Activated naive CD4-positive, alpha-beta T cell treated with anti-CD3 and anti-CD28 coated beads for 36 hours (primary cell): ENCODE measurements at regions of chr11 and their contacts with region 1.

Region 1: DNA sequence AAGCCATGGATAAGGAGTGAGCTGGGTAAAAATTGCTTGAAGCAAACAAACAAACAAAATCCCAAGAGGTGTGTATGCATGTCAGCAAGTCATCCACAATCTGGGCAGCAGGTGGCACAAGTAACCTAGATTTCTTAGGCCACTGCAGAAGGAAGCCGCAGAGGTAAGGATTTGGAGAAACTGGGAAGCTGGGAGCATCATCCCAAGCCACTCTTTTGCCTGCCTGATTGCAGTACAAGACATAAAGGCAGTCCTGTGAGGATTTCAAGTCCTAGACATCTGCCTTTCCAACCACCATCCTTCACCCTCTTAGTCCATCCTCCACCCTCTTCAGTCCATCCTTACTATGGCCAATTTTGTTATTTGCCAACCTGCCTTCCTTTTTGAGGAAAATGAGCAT is 67.2 kb upstream of the BMAL1 start:
- DNase-seq: peak; percentile 62
- H3K4me3 Mint-ChIP-seq: no peak overlapping the region
- H3K27ac Mint-ChIP-seq: no peak overlapping the region
- H3K4me1 Mint-ChIP-seq: peaks cover 39% of the 10 kb centered on the region
- H3K27me3 Mint-ChIP-seq: no peaks in the 10 kb centered on the region

Region 2: GRCh38 chr11:12693479-12694181 is 516.8 kb before region 1 on chr11:
- CTCF ChIA-PET with region 1: no interaction called
- intact Hi-C with region 1: loop called (anchors 10 kb)
- DNase-seq: peak; percentile 57
- H3K4me3 Mint-ChIP-seq: no peak overlapping the region
- H3K27ac Mint-ChIP-seq: no peak overlapping the region
- H3K4me1 Mint-ChIP-seq: peaks cover 21% of the 10 kb centered on the region
- H3K27me3 Mint-ChIP-seq: peaks cover 73% of the 10 kb centered on the region

Region 3: GRCh38 chr11:13061284-13061990 is 149.0 kb before region 1 on chr11:
- CTCF ChIA-PET with region 1: no interaction called
- intact Hi-C with region 1: no loop called
- DNase-seq: no peak
- H3K4me3 Mint-ChIP-seq: no peak overlapping the region
- H3K27ac Mint-ChIP-seq: no peak overlapping the region
- H3K4me1 Mint-ChIP-seq: no peaks in the 10 kb centered on the region
- H3K27me3 Mint-ChIP-seq: peaks cover 11% of the 10 kb centered on the region

Region 4: DNA sequence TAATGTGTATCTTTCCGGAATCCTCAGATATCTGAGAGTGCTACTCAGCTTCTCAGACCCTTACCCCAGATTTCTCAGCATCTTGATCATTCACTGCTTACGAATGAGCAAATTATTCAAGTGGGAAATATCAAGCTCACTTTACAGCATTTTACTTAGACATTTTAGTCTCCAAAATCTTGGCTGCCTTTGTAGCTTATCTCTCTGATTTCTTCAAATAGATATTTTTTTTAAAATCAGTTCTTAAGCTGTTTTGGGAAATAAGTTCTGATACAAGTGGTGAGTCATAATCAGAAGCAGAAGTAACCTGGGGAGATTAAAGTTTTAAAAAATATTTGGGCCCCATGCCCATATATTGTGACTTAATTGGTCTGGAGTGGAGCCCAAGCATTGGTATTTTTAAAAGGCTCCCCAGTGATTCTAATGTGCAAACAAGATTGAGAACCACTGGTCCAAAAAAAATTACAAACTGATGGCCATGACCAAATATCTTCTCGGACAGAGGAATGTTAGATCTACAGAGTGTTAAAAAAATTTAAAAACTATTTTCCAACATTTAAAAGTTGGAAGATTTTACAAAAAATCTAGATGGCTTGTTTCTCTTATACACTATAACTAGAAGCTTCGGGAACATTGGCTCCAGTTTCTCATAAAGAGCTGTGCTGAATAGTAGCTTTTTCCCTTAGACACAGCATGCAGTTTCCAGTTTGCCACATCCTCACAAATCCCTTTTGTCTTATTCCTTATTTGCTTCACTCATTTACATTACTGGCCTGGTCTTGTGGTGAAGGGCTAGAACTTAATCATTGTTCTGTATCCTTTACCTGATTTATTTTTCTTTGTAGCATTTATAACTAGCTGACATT is 20.6 kb before region 1 on chr11:
- CTCF ChIA-PET with region 1: interaction called, 10 read pairs
- intact Hi-C with region 1: no loop called
- DNase-seq: no peak
- H3K4me3 Mint-ChIP-seq: no peak overlapping the region
- H3K27ac Mint-ChIP-seq: no peak overlapping the region
- H3K4me1 Mint-ChIP-seq: no peaks in the 10 kb centered on the region
- H3K27me3 Mint-ChIP-seq: peaks cover 9% of the 10 kb centered on the region

Region 5: GRCh38 chr11:13276832-13277767 is 66.7 kb after region 1 on chr11:
- CTCF ChIA-PET with region 1: interaction called, 3 read pairs
- intact Hi-C with region 1: loop called (anchors 1 kb)
- DNase-seq: peak; percentile 98
- H3K4me3 Mint-ChIP-seq: peak overlapping the region; percentile 94
- H3K27ac Mint-ChIP-seq: peak overlapping the region; percentile 74
- H3K4me1 Mint-ChIP-seq: peaks cover 42% of the 10 kb centered on the region
- H3K27me3 Mint-ChIP-seq: no peaks in the 10 kb centered on the region

Region 6: GRCh38 chr11:13335319-13335718 is 124.9 kb after region 1 on chr11:
- CTCF ChIA-PET with region 1: interaction called, 44 read pairs
- intact Hi-C with region 1: loop called (anchors 1 kb)
- DNase-seq: peak; percentile 86
- H3K4me3 Mint-ChIP-seq: no peak overlapping the region
- H3K27ac Mint-ChIP-seq: no peak overlapping the region
- H3K4me1 Mint-ChIP-seq: peaks cover 76% of the 10 kb centered on the region
- H3K27me3 Mint-ChIP-seq: no peaks in the 10 kb centered on the region

Region 7: GRCh38 chr11:13384908-13385640 is 174.7 kb after region 1 on chr11:
- CTCF ChIA-PET with region 1: interaction called, 14 read pairs
- intact Hi-C with region 1: loop called (anchors 2 kb)
- DNase-seq: peak; percentile 46
- H3K4me3 Mint-ChIP-seq: no peak overlapping the region
- H3K27ac Mint-ChIP-seq: no peak overlapping the region
- H3K4me1 Mint-ChIP-seq: peaks cover 2% of the 10 kb centered on the region
- H3K27me3 Mint-ChIP-seq: no peaks in the 10 kb centered on the region

Region 8: DNA sequence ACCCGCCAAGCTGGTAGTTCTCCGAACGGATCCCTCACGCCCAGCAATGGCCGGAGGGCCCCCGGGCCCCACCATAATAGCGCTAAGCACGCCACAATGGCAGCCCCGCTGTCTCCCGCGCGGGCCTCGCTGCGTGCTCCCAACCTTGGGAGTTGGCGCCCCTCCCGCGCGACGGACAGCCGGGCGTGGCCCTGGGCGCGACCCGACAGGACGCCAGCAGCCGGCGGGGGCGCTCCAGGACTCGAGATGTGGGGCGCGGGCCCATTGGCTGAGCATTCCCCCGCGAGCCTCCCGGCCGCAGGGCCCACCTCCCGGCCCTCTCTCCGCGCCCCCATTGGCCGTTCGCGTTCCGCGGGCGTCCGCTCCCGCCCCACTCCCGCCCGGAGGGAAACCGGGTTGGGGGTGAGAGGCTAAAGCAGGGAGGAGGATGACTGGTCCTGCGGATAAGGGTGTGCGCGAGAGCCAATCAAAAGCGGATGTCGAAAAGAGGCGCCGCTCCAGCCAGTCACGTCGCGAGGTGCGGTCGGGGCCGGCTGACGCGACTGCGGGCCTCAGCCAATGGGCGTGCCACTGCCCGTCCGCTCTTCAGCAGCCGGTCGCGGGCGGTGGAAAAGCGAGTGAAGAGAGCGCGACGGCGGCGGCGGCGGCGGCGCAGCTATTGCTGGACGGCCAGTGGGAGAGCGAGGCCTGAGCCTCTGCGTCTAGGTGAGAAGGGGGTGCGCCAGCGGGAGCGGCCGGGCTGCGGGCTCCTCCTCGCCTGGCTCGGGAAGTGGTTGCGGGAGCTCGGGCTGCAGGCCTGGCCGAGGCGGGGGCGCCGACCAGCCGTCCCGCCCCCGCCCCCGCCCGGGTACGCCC is 457.9 kb after region 1 on chr11 and contains the start of gene FAR1:
- CTCF ChIA-PET with region 1: no interaction called
- intact Hi-C with region 1: loop called (anchors 10 kb)
- DNase-seq: peak; percentile 98
- H3K4me3 Mint-ChIP-seq: peak within 1 kb of the TSS; percentile 95
- H3K27ac Mint-ChIP-seq: peak within 1 kb of the TSS; percentile 92
- H3K4me1 Mint-ChIP-seq: peaks cover 40% of the 10 kb centered on the region
- H3K27me3 Mint-ChIP-seq: peaks cover 7% of the 10 kb centered on the region
- total RNA-seq, gene FAR1: 37.2 to 42.3 TPM